MCF 10A (cell line): ENCODE measurements at regions of chr20 and their contacts with region 1.

Region 1: DNA sequence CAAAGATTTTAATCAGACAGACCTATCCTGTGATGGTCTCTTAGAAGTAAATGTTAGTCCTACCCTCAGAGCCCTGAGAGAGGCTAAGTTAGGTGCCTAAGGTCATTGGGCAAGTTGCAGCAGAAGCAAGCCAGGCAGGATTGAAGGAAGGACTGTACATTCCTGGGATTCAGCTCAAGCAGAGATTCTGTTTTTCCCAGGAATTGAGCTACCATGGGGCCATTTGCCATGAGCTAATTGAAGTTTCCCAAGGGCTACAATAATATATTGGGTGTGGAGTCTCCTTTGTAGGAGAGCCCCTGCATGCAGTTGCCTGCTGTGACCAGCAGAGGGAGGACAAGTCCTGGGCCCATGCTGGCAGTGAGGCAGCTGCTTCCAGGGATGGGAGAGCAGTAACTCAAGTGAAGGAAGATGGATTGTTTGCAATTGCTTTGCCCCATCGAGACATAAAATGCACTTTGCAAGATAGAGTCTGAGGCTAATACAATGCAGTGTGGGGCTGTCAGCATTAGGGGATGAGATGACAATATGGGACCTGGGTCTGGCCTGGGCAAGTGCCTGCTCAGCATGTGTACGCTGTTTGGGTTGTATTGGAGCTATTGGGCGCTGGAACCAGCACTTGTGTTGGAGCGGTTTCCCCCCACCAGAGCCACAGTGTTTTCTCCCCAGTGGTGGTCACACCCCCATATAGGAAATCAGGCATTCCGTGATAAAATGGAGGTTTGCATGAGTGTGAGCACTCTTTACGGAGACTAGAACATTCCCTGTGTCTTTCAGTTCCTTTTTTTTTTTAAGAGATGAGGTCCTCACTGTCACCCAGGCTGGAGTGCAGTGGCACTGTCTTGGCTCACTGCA is 27.9 kb downstream of the DNMT3B start:
- DNase-seq: peak; percentile 66
- H3K4me3 Mint-ChIP-seq: no peak overlapping the region
- H3K27ac Mint-ChIP-seq: no peak overlapping the region
- H3K4me1 Mint-ChIP-seq: no peaks in the 10 kb centered on the region
- H3K27me3 Mint-ChIP-seq: no peaks in the 10 kb centered on the region
- CTCF ChIP-seq: peak; percentile 94

Region 2: GRCh38 chr20:32344835-32345506 is 445.2 kb before region 1 on chr20:
- CTCF ChIA-PET with region 1: no interaction called
- POLR2A ChIA-PET with region 1: no interaction called
- intact Hi-C with region 1: no loop called
- DNase-seq: no peak
- H3K4me3 Mint-ChIP-seq: no peak overlapping the region
- H3K27ac Mint-ChIP-seq: no peak overlapping the region
- H3K4me1 Mint-ChIP-seq: peaks cover 7% of the 10 kb centered on the region
- H3K27me3 Mint-ChIP-seq: no peaks in the 10 kb centered on the region
- CTCF ChIP-seq: no peak

Region 3: GRCh38 chr20:32574296-32575226 is 215.6 kb before region 1 on chr20:
- CTCF ChIA-PET with region 1: no interaction called
- POLR2A ChIA-PET with region 1: no interaction called
- intact Hi-C with region 1: no loop called
- DNase-seq: peak; percentile 77
- H3K4me3 Mint-ChIP-seq: no peak overlapping the region
- H3K27ac Mint-ChIP-seq: no peak overlapping the region
- H3K4me1 Mint-ChIP-seq: no peaks in the 10 kb centered on the region
- H3K27me3 Mint-ChIP-seq: no peaks in the 10 kb centered on the region
- CTCF ChIP-seq: no peak

Region 4: GRCh38 chr20:32779500-32780211 is 10.5 kb before region 1 on chr20:
- CTCF ChIA-PET with region 1: interaction called, 39 read pairs
- POLR2A ChIA-PET with region 1: no interaction called
- intact Hi-C with region 1: no loop called
- DNase-seq: no peak
- H3K4me3 Mint-ChIP-seq: no peak overlapping the region
- H3K27ac Mint-ChIP-seq: no peak overlapping the region
- H3K4me1 Mint-ChIP-seq: peaks cover 17% of the 10 kb centered on the region
- H3K27me3 Mint-ChIP-seq: no peaks in the 10 kb centered on the region
- CTCF ChIP-seq: no peak

Region 5: GRCh38 chr20:32819992-32820710 is 30.0 kb after region 1 on chr20:
- CTCF ChIA-PET with region 1: interaction called, 40 read pairs
- POLR2A ChIA-PET with region 1: interaction called, 5 read pairs
- intact Hi-C with region 1: no loop called
- DNase-seq: peak; percentile 61
- H3K4me3 Mint-ChIP-seq: peak overlapping the region; percentile 84
- H3K27ac Mint-ChIP-seq: peak overlapping the region; percentile 74
- H3K4me1 Mint-ChIP-seq: peaks cover 33% of the 10 kb centered on the region
- H3K27me3 Mint-ChIP-seq: no peaks in the 10 kb centered on the region
- CTCF ChIP-seq: peak; percentile 4

Region 6: DNA sequence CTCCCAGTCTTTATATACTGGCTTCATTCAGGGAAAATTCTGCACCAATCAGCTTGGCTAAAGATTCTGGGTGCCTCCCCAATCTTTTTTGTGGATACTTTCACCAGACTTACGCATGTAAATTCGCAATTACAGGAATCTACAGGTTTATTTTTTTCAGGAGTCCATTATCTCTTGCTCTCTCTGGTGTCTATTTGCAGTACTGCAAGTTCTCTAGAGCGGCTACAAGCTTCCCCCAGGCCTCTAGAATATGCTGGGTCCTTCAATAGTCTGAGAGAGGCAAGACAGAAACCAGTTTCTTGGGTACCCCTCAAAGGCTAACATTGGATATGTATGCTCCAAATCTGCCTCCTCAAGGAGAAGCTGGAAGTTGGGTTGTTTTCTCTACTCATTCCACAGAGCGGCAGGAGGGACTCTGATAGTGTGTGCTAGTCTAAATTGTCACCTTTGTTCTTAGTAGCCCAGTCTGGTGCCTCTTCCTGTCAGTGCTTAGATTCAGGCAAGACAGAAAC is 155.6 kb after region 1 on chr20:
- CTCF ChIA-PET with region 1: interaction called, 42 read pairs
- POLR2A ChIA-PET with region 1: no interaction called
- intact Hi-C with region 1: loop called (anchors 1 kb)
- DNase-seq: peak; percentile 39
- H3K4me3 Mint-ChIP-seq: no peak overlapping the region
- H3K27ac Mint-ChIP-seq: no peak overlapping the region
- H3K4me1 Mint-ChIP-seq: no peaks in the 10 kb centered on the region
- H3K27me3 Mint-ChIP-seq: peaks cover 94% of the 10 kb centered on the region
- CTCF ChIP-seq: peak; percentile 55

Region 7: GRCh38 chr20:33108661-33109060 is 318.5 kb after region 1 on chr20:
- CTCF ChIA-PET with region 1: no interaction called
- POLR2A ChIA-PET with region 1: no interaction called
- intact Hi-C with region 1: no loop called
- DNase-seq: no peak
- H3K4me3 Mint-ChIP-seq: no peak overlapping the region
- H3K27ac Mint-ChIP-seq: no peak overlapping the region
- H3K4me1 Mint-ChIP-seq: no peaks in the 10 kb centered on the region
- H3K27me3 Mint-ChIP-seq: peaks cover 46% of the 10 kb centered on the region
- CTCF ChIP-seq: no peak

Region 8: DNA sequence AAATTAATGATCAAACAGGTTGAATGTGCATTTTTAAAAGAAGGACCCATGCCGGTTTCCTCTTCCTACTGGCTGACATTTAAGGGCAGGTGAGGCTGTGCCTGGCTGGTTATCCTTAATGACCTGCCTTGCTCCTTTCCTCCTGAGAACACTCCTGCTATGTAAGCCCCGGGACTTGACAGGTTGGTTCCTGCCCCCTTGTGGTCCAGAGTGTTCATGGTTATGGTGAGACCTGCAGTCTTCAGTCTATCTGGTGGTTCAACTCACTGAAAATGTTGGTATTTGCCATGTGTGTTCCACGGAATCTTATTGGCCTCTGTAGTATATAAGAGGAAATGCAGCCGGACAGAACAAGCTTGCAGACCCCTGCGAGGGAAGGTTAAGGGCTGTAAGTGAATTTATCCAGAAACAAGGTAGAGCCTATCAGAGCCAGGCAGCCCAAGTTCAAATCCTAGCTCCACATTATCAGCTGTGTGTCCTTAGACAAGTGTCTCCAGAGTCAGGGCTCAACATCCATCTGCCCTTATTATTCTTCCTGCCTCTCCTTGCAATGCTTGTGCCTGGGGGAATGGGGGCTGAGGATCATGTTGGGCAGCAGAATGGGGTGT is 421.8 kb after region 1 on chr20:
- CTCF ChIA-PET with region 1: interaction called, 3 read pairs
- POLR2A ChIA-PET with region 1: no interaction called
- intact Hi-C with region 1: loop called (anchors 5 kb)
- DNase-seq: peak; percentile 61
- H3K4me3 Mint-ChIP-seq: no peak overlapping the region
- H3K27ac Mint-ChIP-seq: no peak overlapping the region
- H3K4me1 Mint-ChIP-seq: no peaks in the 10 kb centered on the region
- H3K27me3 Mint-ChIP-seq: peaks cover 69% of the 10 kb centered on the region
- CTCF ChIP-seq: peak; percentile 20

Region 9: GRCh38 chr20:34210271-34210670 is 1420.1 kb after region 1 on chr20:
- CTCF ChIA-PET with region 1: no interaction called
- POLR2A ChIA-PET with region 1: no interaction called
- intact Hi-C with region 1: no loop called
- DNase-seq: no peak
- H3K4me3 Mint-ChIP-seq: no peak overlapping the region
- H3K27ac Mint-ChIP-seq: no peak overlapping the region
- H3K4me1 Mint-ChIP-seq: no peaks in the 10 kb centered on the region
- H3K27me3 Mint-ChIP-seq: no peaks in the 10 kb centered on the region
- CTCF ChIP-seq: no peak